Ovary (tissue), 10 donors: ENCODE measurements at regions of chr5 and their contacts with region 1.

Region 1: DNA sequence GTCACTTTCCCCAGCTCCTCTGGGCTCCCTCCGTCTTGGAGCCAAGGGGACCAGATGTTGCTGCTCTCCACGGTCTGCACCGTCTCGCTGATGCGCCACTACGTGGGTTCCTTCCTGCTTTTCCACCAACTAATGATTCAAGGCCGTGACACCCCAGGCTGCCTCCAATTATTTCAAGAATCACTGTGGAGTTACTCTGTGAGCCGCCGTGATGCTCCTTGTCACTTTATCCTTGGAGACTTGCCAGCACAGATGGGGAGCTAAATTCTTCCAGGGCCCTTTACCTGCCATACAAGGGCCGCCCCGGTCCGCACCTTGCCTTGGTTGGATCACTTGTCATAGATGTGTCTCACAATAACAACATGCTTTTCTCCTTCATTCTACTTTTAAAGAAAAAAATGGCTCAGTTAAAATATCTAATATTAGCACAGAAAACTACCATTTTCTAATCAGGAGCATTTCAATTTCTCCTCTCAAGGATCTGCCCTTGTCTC is 202.0 kb downstream of the FSTL4 start:
- DNase-seq: no peak
- H3K4me3 ChIP-seq: no peak overlapping the region
- H3K27ac ChIP-seq: no peak overlapping the region
- H3K4me1 ChIP-seq: no peaks in the 10 kb centered on the region
- H3K27me3 ChIP-seq: no peaks in the 10 kb centered on the region
- CTCF ChIP-seq: no peak
- EP300 ChIP-seq: no peak
- POLR2A ChIP-seq: no peak

Region 2: GRCh38 chr5:133196441-133197085 is 213.8 kb before region 1 on chr5:
- intact Hi-C with region 1: no loop called
- DNase-seq: no peak
- H3K4me3 ChIP-seq: no peak overlapping the region
- H3K27ac ChIP-seq: no peak overlapping the region
- H3K4me1 ChIP-seq: no peaks in the 10 kb centered on the region
- H3K27me3 ChIP-seq: no peaks in the 10 kb centered on the region
- CTCF ChIP-seq: no peak
- EP300 ChIP-seq: no peak
- POLR2A ChIP-seq: no peak

Region 3: GRCh38 chr5:134769206-134769605 is 1358.8 kb after region 1 on chr5:
- intact Hi-C with region 1: loop called in 1 of 4 experiments (anchors 5 kb)
- DNase-seq: no peak
- H3K4me3 ChIP-seq: no peak overlapping the region
- H3K27ac ChIP-seq: no peak overlapping the region
- H3K4me1 ChIP-seq: no peaks in the 10 kb centered on the region
- H3K27me3 ChIP-seq: no peaks in the 10 kb centered on the region
- CTCF ChIP-seq: no peak
- EP300 ChIP-seq: no peak
- POLR2A ChIP-seq: no peak